ENCODE measurements at regions of chr9 and their contacts with region 1.

Region 1: DNA sequence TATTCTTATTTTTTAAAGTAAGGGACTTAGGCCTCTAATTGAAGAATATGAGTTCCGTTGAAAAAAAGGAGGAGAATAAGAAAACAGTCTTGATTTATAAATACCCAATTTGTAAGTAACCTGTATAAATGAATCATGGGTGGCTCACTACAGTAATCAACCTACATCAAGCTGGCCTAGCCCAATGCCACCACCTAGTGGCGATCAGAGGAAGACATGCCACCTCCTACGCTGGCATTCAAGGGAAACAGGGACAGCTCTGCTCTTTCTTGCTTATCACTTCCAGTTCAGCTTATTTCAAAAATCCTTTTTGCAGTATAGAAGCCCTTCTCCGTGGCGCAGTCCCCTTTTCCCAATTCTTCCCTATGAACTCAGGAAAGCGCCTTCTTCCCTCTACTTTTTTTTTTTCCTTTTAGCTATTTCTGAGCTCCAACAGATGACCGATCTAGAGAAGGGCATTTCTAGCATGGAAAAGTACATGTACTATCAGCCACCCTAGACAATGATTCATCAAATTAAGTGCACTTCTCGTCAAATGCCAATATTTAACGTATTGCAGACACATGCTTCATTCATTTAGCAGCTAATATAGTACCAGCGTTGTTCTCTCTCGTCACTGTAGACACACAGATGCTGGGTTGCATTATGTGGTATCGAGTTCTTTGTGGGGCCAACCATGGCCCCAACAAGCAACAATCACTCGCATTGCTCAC is 28.3 kb downstream of the PTPN3 start:
- DNase-seq: peak; percentile 91
- H3K4me3 Mint-ChIP-seq: no peak overlapping the region
- H3K27ac Mint-ChIP-seq: peak overlapping the region; percentile 50
- H3K4me1 Mint-ChIP-seq: peaks cover 29% of the 10 kb centered on the region
- H3K27me3 Mint-ChIP-seq: peaks cover 20% of the 10 kb centered on the region

Region 2: GRCh38 chr9:109101810-109102209 is 368.0 kb before region 1 on chr9:
- intact Hi-C with region 1: loop called (anchors 1 kb)
- DNase-seq: peak; percentile 75
- H3K4me3 Mint-ChIP-seq: peak overlapping the region; percentile 69
- H3K27ac Mint-ChIP-seq: peak overlapping the region; percentile 89
- H3K4me1 Mint-ChIP-seq: peaks cover 53% of the 10 kb centered on the region
- H3K27me3 Mint-ChIP-seq: no peaks in the 10 kb centered on the region

Region 3: DNA sequence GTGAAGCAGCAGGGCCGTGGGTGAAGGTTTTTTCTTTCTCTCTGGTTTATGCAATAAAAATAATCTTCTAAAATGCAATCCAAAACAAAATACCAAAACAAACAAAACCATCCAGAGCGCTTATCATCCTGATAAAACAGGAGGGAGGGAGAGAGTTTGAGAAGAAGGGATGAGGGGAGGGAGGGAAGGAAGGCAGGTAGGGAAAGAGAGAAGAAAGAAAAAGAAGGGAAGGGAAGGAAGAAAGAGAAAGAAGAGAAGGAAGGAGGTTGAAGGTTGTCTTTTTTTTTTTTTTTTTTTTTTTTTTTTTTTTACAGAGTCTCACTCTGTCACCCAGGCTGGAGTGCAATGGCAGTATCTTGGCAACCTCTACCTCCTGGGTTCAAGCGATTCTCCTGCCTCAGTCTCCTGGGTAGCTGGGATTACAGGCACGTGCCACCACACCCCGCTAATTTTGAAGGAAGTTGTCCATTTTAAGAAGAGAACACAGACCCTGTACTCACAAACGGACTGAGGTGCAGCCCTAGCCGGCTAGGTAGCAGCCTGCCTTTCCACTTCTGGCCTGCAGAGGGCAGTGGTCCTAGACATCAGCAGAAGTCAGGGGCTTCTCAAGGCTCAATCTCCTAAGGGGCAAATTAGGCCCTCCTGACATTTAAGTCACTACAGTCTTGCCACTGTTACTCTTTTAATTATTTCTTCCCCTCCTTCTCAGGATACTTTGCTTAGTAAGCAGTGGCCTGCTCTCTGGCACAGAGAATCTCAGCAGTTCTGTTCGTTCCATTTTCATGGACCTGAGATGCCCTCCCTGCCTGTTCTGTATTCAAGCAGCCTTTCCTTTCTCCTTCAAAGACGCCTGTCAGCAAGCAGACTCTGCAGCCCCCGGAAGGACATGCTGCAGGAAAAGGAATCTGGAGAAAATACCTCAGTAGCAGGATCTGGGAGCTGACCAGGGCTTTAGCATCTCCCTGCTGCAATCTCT is 225.4 kb before region 1 on chr9:
- intact Hi-C with region 1: loop called (anchors 1 kb)
- DNase-seq: peak; percentile 91
- H3K4me3 Mint-ChIP-seq: no peak overlapping the region
- H3K27ac Mint-ChIP-seq: no peak overlapping the region
- H3K4me1 Mint-ChIP-seq: peaks cover 4% of the 10 kb centered on the region
- H3K27me3 Mint-ChIP-seq: peaks cover 35% of the 10 kb centered on the region

Region 4: GRCh38 chr9:109401168-109401989 is 68.4 kb before region 1 on chr9:
- intact Hi-C with region 1: loop called (anchors 2 kb)
- DNase-seq: peak; percentile 83
- H3K4me3 Mint-ChIP-seq: peak overlapping the region; percentile 9
- H3K27ac Mint-ChIP-seq: peak overlapping the region; percentile 82
- H3K4me1 Mint-ChIP-seq: peaks cover 15% of the 10 kb centered on the region
- H3K27me3 Mint-ChIP-seq: peaks cover 12% of the 10 kb centered on the region

Region 5: GRCh38 chr9:109440797-109441287 is 29.0 kb before region 1 on chr9:
- intact Hi-C with region 1: loop called (anchors 1 kb)
- DNase-seq: peak; percentile 92
- H3K4me3 Mint-ChIP-seq: no peak overlapping the region
- H3K27ac Mint-ChIP-seq: peak overlapping the region; percentile 83
- H3K4me1 Mint-ChIP-seq: peaks cover 18% of the 10 kb centered on the region
- H3K27me3 Mint-ChIP-seq: peaks cover 22% of the 10 kb centered on the region